ENCODE measurements at regions of chr19 and their contacts with region 1.

Region 1: DNA sequence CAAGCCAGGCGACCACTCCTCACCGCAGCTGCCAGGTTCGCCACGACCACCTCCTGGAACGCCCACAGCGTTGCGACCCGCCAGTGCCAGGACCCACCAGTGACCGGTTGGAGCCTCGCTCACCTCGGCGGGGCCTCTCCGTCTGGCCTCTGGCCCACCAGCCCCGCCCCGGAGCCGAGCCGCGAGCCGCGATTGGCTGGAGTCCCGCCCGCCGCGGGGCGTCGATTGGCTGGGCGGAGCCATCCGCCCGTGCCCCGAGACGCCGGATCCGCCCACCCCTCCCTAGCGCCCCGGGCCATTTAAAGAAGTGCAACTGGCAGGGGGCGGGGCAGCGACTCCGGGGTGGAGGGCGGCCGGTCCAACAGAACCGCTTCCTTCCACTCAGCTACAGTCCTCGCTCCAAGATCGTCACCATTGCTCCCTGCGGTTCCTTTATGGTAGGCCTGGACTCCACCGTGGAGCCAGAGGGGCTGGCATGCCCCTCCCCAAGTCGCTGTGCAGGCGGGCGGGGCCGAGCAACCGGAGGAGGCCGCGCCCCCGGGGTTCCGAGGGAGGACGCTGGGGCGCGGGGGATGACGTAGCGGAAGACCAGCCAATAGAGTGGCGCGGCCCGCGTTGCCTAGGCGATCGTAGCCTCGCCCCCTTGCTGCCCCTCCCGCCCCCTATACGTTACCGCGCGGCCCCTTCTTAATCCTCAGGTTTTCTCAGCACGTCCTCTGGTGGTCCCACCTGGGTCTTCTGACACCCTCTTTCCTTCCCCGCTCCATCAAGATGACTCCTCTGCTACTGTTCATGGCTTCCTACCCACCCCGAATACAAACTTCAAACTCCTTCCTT is at the start of gene SERTAD3:
- DNase-seq: peak; percentile 99
- ATAC-seq: peak; percentile 68
- H3K4me3 ChIP-seq: peak within 1 kb of the TSS; percentile 85 to 100 (median 95)
- H3K4me3 Mint-ChIP-seq: peak within 1 kb of the TSS; percentile 97
- H3K27ac ChIP-seq: peak within 1 kb of the TSS; percentile 87 to 92
- H3K27ac Mint-ChIP-seq: peak within 1 kb of the TSS; percentile 95
- H3K4me1 ChIP-seq: peaks cover 12% of the 10 kb centered on the region in 2 donors
- H3K4me1 Mint-ChIP-seq: peaks cover 26% of the 10 kb centered on the region
- H3K27me3 ChIP-seq: no peaks in the 10 kb centered on the region
- H3K27me3 Mint-ChIP-seq: no peaks in the 10 kb centered on the region
- CTCF ChIP-seq: peak; percentile 42
- total RNA-seq, gene SERTAD3: 39.3 and 41.6 TPM in 2 replicates

Region 2: GRCh38 chr19:39328046-39328705 is 1116.2 kb before region 1 on chr19:
- CTCF ChIA-PET with region 1: no interaction called
- POLR2A ChIA-PET with region 1: no interaction called
- intact Hi-C with region 1: no loop called
- DNase-seq: peak; percentile 78
- ATAC-seq: peak; percentile 92
- H3K4me3 ChIP-seq: no peak overlapping the region
- H3K4me3 Mint-ChIP-seq: no peak overlapping the region
- H3K27ac ChIP-seq: no peak overlapping the region
- H3K27ac Mint-ChIP-seq: no peak overlapping the region
- H3K4me1 ChIP-seq: peaks cover 5 to 11% of the 10 kb centered on the region in 2 donors
- H3K4me1 Mint-ChIP-seq: peaks cover 30% of the 10 kb centered on the region
- H3K27me3 ChIP-seq: no peaks in the 10 kb centered on the region
- H3K27me3 Mint-ChIP-seq: no peaks in the 10 kb centered on the region
- CTCF ChIP-seq: peak; percentile 94

Region 3: GRCh38 chr19:40305403-40305802 is 139.0 kb before region 1 on chr19:
- CTCF ChIA-PET with region 1: interaction called, 15 read pairs
- POLR2A ChIA-PET with region 1: no interaction called
- intact Hi-C with region 1: no loop called
- DNase-seq: peak; percentile 84
- ATAC-seq: peak; percentile 68
- H3K4me3 ChIP-seq: no peak overlapping the region
- H3K4me3 Mint-ChIP-seq: no peak overlapping the region
- H3K27ac ChIP-seq: no peak overlapping the region
- H3K27ac Mint-ChIP-seq: no peak overlapping the region
- H3K4me1 ChIP-seq: peaks cover 0 to 3% of the 10 kb centered on the region in 2 donors
- H3K4me1 Mint-ChIP-seq: peaks cover 2% of the 10 kb centered on the region
- H3K27me3 ChIP-seq: no peaks in the 10 kb centered on the region
- H3K27me3 Mint-ChIP-seq: no peaks in the 10 kb centered on the region
- CTCF ChIP-seq: peak; percentile 88

Region 4: GRCh38 chr19:40403262-40403984 is 41.0 kb before region 1 on chr19:
- CTCF ChIA-PET with region 1: interaction called, 5 read pairs
- POLR2A ChIA-PET with region 1: interaction called, 3 read pairs
- intact Hi-C with region 1: loop called (anchors 1 kb)
- DNase-seq: peak; percentile 86
- ATAC-seq: peak; percentile 81
- H3K4me3 ChIP-seq: peak overlapping the region; percentile 27 to 84 (median 74)
- H3K4me3 Mint-ChIP-seq: peak overlapping the region; percentile 97
- H3K27ac ChIP-seq: peak overlapping the region; percentile 30 to 49
- H3K27ac Mint-ChIP-seq: peak overlapping the region; percentile 93
- H3K4me1 ChIP-seq: peaks cover 6 to 18% of the 10 kb centered on the region in 2 donors
- H3K4me1 Mint-ChIP-seq: peaks cover 29% of the 10 kb centered on the region
- H3K27me3 ChIP-seq: peaks cover 0 to 6% (median 3%) of the 10 kb centered on the region in 4 experiments
- H3K27me3 Mint-ChIP-seq: peaks cover 8% of the 10 kb centered on the region
- CTCF ChIP-seq: no peak

Region 5: DNA sequence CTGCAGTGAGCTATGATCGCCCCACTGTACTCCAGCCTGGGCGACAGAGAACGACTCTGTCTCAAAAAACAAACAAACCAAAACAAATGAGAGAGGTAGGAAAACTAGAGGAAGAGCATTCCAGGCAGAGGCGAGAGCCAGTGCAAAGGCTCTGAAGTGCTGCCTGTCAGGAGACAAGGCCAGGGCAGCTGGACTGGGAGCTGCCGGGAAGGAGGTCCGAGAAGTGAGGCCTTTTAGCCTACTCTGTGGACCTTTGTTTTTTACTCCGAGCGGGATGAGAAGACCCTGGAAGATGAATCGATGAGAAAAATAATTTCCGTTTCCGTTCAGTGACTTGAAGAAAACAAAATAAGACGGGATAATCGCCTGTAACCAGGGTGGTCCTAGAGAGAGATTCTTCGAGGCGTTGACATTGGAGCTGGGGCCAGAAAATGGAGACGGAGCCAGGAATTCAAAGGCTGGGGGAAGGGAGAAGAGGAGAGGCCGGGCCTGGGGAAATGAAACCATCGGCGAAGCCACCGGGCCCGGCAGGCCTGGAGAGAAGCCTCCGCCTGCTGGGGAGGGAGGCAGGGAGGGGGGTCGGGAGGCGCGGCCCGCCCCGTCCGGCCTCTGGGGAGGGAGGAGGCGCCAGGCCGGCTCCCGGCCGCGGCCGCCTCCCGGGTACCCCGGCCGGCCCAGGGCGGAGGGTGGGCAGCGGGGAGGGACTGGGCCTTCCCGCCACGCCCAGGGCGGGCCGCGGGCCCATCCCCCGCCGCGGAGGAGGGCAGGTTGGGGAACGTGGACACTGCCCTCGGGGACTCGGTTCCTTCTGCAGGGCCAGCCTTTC is 10.8 kb before region 1 on chr19:
- CTCF ChIA-PET with region 1: interaction called, 4 read pairs
- POLR2A ChIA-PET with region 1: interaction called, 63 read pairs
- intact Hi-C with region 1: loop called (anchors 1 kb)
- DNase-seq: peak; percentile 77
- ATAC-seq: peak; percentile 77
- H3K4me3 ChIP-seq: peak overlapping the region in 4 of 5 experiments; percentile 36 to 69 (median 52)
- H3K4me3 Mint-ChIP-seq: peak overlapping the region; percentile 92
- H3K27ac ChIP-seq: peak overlapping the region; percentile 71 to 74
- H3K27ac Mint-ChIP-seq: peak overlapping the region; percentile 97
- H3K4me1 ChIP-seq: peaks cover 19 to 30% of the 10 kb centered on the region in 2 donors
- H3K4me1 Mint-ChIP-seq: peaks cover 24% of the 10 kb centered on the region
- H3K27me3 ChIP-seq: no peaks in the 10 kb centered on the region
- H3K27me3 Mint-ChIP-seq: no peaks in the 10 kb centered on the region
- CTCF ChIP-seq: no peak

Region 6: GRCh38 chr19:40489882-40490230 is 45.4 kb after region 1 on chr19:
- CTCF ChIA-PET with region 1: no interaction called
- POLR2A ChIA-PET with region 1: no interaction called
- intact Hi-C with region 1: loop called (anchors 1 kb)
- DNase-seq: no peak
- ATAC-seq: no peak
- H3K4me3 ChIP-seq: no peak overlapping the region
- H3K4me3 Mint-ChIP-seq: no peak overlapping the region
- H3K27ac ChIP-seq: no peak overlapping the region
- H3K27ac Mint-ChIP-seq: no peak overlapping the region
- H3K4me1 ChIP-seq: peaks cover 0 to 3% of the 10 kb centered on the region in 2 donors
- H3K4me1 Mint-ChIP-seq: peaks cover 6% of the 10 kb centered on the region
- H3K27me3 ChIP-seq: peaks cover 0 to 32% (median 3%) of the 10 kb centered on the region in 4 experiments
- H3K27me3 Mint-ChIP-seq: peaks cover 35% of the 10 kb centered on the region
- CTCF ChIP-seq: no peak

Region 7: GRCh38 chr19:40576585-40577451 is 132.4 kb after region 1 on chr19 and contains the start of gene SHKBP1:
- CTCF ChIA-PET with region 1: no interaction called
- POLR2A ChIA-PET with region 1: no interaction called
- intact Hi-C with region 1: loop called (anchors 1 kb)
- DNase-seq: peak; percentile 96
- ATAC-seq: peak; percentile 98
- H3K4me3 ChIP-seq: peak within 1 kb of the TSS; percentile 52 to 90 (median 88)
- H3K4me3 Mint-ChIP-seq: peak within 1 kb of the TSS; percentile 83
- H3K27ac ChIP-seq: peak within 1 kb of the TSS; percentile 68 to 77
- H3K27ac Mint-ChIP-seq: peak within 1 kb of the TSS; percentile 89
- H3K4me1 ChIP-seq: peaks cover 18 to 42% of the 10 kb centered on the region in 2 donors
- H3K4me1 Mint-ChIP-seq: peaks cover 34% of the 10 kb centered on the region
- H3K27me3 ChIP-seq: no peaks in the 10 kb centered on the region
- H3K27me3 Mint-ChIP-seq: no peaks in the 10 kb centered on the region
- CTCF ChIP-seq: no peak
- total RNA-seq, gene SHKBP1: 179 and 192 TPM in 2 replicates

Region 8: DNA sequence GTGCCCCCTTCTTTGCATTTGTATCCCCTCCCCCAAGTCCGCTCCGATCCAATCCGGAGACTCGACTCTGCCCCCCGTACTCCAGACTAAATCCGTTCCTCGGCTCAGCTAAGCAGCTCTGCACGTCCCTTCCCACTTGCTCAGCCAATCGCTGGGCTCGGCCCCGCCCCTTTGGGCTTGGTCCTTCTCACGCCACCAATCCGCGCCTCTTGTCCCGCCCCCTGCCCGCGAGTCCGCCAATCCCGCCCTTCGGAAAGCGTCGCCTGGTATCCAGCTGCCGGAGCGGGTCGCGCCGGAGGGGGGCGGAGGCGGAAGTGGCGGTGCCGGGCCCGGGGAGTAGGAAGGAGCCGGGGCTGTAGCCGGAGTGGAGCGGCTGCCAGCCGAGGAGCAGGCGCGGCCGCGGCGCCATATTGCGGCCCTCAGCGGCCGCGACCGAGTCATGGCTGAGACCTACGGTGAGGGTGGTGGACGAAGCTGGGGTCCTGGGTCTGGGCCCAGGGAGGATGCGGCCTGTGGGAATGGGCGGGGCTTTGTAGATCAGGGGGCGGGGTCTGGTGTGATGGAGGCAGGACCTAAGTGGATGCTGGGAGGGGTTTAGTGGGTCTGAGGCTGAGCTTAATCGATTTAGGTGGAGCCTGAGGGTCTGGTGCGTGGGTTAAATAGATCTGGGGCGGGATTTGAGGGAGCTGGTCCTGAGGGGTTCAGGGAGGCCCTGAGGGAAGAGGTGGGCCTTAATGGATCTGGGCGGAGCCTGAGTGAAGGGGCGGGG is 333.7 kb after region 1 on chr19 and contains the start of gene RAB4B:
- CTCF ChIA-PET with region 1: no interaction called
- POLR2A ChIA-PET with region 1: interaction called, 16 read pairs
- intact Hi-C with region 1: loop called (anchors 5 kb)
- DNase-seq: peak; percentile 100
- ATAC-seq: peak; percentile 77
- H3K4me3 ChIP-seq: peak within 1 kb of the TSS; percentile 67 to 100 (median 87)
- H3K4me3 Mint-ChIP-seq: peak within 1 kb of the TSS; percentile 99
- H3K27ac ChIP-seq: peak within 1 kb of the TSS; percentile 97 to 99
- H3K27ac Mint-ChIP-seq: peak within 1 kb of the TSS; percentile 99
- H3K4me1 ChIP-seq: peaks cover 49 to 64% of the 10 kb centered on the region in 2 donors
- H3K4me1 Mint-ChIP-seq: peaks cover 64% of the 10 kb centered on the region
- H3K27me3 ChIP-seq: no peaks in the 10 kb centered on the region
- H3K27me3 Mint-ChIP-seq: no peaks in the 10 kb centered on the region
- CTCF ChIP-seq: no peak
- total RNA-seq, gene RAB4B: 104 and 108 TPM in 2 replicates

Measured in B cell (primary cell).